ENCODE measurements at regions of chr4 and their contacts with region 1.

Region 1: GRCh38 chr4:147518846-147519767 is 38.2 kb downstream of the EDNRA start:
- DNase-seq: peak; percentile 86
- ATAC-seq: peak; percentile 89
- H3K4me3 ChIP-seq: no peak overlapping the region
- H3K27ac ChIP-seq: no peak overlapping the region
- H3K4me1 ChIP-seq: no peaks in the 10 kb centered on the region; the same call in 1 of the 2 replicates
- H3K27me3 ChIP-seq: no peaks in the 10 kb centered on the region
- CTCF ChIP-seq: peak; percentile 85
- POLR2A ChIP-seq: no peak
- RAD21 ChIP-seq: peak; percentile 88

Region 2: GRCh38 chr4:147111033-147111367 is 408.1 kb before region 1 on chr4:
- CTCF ChIA-PET with region 1: interaction called, 5 read pairs
- POLR2A ChIA-PET with region 1: no interaction called
- dilution Hi-C with region 1: no loop called
- in situ Hi-C with region 1: no loop called
- intact Hi-C with region 1: loop called (anchors 5 kb)
- DNase-seq: peak; percentile 47
- ATAC-seq: peak; percentile 82
- H3K4me3 ChIP-seq: no peak overlapping the region
- H3K27ac ChIP-seq: no peak overlapping the region
- H3K4me1 ChIP-seq: no peaks in the 10 kb centered on the region
- H3K27me3 ChIP-seq: no peaks in the 10 kb centered on the region
- CTCF ChIP-seq: peak; percentile 58
- POLR2A ChIP-seq: no peak
- RAD21 ChIP-seq: peak; percentile 66